Activated CD8-positive, alpha-beta T cell treated with anti-CD3 and anti-CD28 coated beads, Interleukin-2, amount 10 ng/mL, durations not matched to agents 7 days and 5 days (primary cell): ENCODE measurements at regions of chr1 and their contacts with region 1.

Region 1: DNA sequence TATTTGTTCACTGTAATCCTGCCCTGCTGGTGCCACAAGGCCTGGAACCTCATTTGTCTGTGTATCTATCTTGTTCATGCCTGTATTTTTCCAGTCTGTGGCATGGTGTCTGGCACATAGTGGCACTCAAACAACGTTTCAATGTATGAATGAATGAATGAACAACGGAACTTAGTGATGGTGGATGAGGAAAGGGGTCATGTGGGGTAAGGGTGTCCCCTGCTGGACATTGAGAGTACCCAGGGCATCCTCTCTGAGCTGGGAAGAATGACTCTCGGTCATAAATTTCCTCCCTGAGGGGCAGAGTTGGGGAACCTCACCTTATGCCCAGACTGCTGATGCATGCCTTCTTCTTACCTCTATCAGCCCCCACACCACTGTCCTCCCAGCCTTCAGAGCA is 18.9 kb upstream of the ZNF683 start:
- DNase-seq: peak; percentile 78
- ATAC-seq: peak; percentile 73
- H3K4me3 Mint-ChIP-seq: no peak overlapping the region
- H3K27ac Mint-ChIP-seq: peak overlapping the region; percentile 35
- H3K4me1 Mint-ChIP-seq: peaks cover 61% of the 10 kb centered on the region
- H3K27me3 Mint-ChIP-seq: peaks cover 3% of the 10 kb centered on the region

Region 2: GRCh38 chr1:26321315-26322041 is 70.0 kb before region 1 on chr1:
- CTCF ChIA-PET with region 1: interaction called, 29 read pairs
- POLR2A ChIA-PET with region 1: interaction called, 3 read pairs
- DNase-seq: peak; percentile 97
- ATAC-seq: peak; percentile 76
- H3K4me3 Mint-ChIP-seq: peak overlapping the region; percentile 84
- H3K27ac Mint-ChIP-seq: peak overlapping the region; percentile 94
- H3K4me1 Mint-ChIP-seq: peaks cover 49% of the 10 kb centered on the region
- H3K27me3 Mint-ChIP-seq: no peaks in the 10 kb centered on the region

Region 3: DNA sequence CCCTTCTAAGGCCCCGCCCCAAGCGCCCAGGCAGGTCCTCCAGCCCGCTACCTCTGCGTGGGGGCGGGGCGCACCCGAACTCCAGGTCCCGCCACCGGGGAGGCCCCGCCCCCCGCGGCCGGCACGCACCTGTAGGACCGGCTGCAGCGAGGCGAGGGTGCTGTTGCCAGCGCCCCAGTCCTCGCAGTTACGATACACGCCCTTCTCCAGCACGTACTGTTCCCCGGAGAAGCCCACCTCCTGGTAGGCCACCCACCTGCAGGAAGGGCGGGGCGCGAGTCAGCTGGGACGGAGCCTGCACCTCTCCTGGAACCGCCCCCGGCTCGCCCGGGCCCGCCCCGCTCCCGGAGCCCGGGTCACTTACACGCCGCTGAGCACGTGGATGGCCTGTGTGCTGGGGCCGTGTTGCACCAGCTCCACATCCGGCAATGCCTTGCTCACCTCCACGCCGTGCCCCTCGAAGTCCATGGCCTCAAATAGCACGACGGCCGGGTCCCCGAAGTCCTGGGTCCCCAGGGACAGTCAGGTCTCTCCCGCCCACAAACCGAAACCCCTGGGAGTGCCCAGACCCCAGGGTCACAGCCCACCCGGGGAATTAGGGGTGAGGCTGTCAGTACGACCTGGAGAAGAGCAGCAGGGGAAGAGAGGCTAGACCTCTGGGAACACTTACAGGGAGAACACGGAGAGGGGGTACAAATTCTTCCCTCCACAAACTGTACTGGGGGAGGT is 54.8 kb before region 1 on chr1:
- CTCF ChIA-PET with region 1: interaction called, 10 read pairs
- POLR2A ChIA-PET with region 1: no interaction called
- DNase-seq: peak; percentile 93
- ATAC-seq: peak; percentile 94
- H3K4me3 Mint-ChIP-seq: peak overlapping the region; percentile 94
- H3K27ac Mint-ChIP-seq: no peak overlapping the region
- H3K4me1 Mint-ChIP-seq: peaks cover 25% of the 10 kb centered on the region
- H3K27me3 Mint-ChIP-seq: peaks cover 5% of the 10 kb centered on the region

Region 4: DNA sequence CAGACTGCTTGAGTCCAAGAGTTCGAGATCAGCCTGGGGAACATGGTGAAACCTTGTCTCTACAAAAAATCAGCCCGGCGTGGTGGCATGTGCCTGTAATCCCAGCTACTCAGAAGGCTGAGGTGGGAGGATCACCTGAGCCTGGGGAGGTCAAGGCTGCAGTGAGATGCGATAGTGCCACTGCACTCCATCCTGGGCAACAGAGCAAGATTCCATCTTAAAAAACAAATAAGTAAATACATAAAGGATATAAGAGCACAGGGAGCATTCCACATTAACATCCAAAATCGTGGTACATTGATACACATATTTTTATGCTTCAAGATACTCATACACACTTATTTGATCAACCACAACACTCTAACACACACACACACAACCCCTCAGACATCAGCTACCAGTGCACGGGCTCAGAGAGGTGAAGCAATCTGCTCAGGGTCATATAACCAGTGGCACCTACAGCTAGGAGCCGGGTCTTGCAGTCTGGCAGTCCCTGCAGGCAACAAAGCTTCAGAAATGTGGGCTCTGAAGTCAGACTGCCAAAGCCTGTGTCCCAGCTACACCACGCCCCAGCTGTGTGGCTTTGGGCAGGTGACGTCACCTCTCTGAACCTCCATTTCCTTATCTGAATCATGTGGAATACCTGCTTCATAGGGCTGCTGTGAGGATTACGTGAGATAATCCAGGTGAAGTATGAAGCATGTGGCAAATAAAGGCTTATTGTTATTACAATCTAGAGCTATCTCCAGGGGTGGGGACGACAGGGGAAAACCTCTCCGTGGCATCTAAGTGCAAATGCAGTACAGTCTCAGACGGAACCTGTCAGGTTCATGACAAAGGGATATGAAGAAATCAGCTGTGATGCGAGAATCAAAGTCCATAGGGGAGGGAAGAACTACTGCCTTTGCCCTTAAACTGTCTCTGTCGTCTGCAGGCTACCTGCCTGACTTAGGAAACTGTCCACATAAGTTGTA is 32.8 kb before region 1 on chr1:
- CTCF ChIA-PET with region 1: interaction called, 59 read pairs
- POLR2A ChIA-PET with region 1: interaction called, 3 read pairs
- DNase-seq: peak; percentile 89
- ATAC-seq: peak; percentile 85
- H3K4me3 Mint-ChIP-seq: peak overlapping the region; percentile 47
- H3K27ac Mint-ChIP-seq: peak overlapping the region; percentile 68
- H3K4me1 Mint-ChIP-seq: peaks cover 70% of the 10 kb centered on the region
- H3K27me3 Mint-ChIP-seq: peaks cover 8% of the 10 kb centered on the region

Region 5: GRCh38 chr1:26372039-26372438 is 19.4 kb before region 1 on chr1:
- CTCF ChIA-PET with region 1: interaction called, 141 read pairs
- POLR2A ChIA-PET with region 1: interaction called, 3 read pairs
- DNase-seq: no peak
- ATAC-seq: no peak
- H3K4me3 Mint-ChIP-seq: no peak overlapping the region
- H3K27ac Mint-ChIP-seq: peak overlapping the region; percentile 90
- H3K4me1 Mint-ChIP-seq: peaks cover 87% of the 10 kb centered on the region
- H3K27me3 Mint-ChIP-seq: peaks cover 2% of the 10 kb centered on the region

Region 6: GRCh38 chr1:26378088-26378878 is 13.2 kb before region 1 on chr1:
- CTCF ChIA-PET with region 1: interaction called, 141 read pairs
- POLR2A ChIA-PET with region 1: interaction called, 3 read pairs
- DNase-seq: peak; percentile 93
- ATAC-seq: peak; percentile 95
- H3K4me3 Mint-ChIP-seq: peak overlapping the region; percentile 58
- H3K27ac Mint-ChIP-seq: peak overlapping the region; percentile 97
- H3K4me1 Mint-ChIP-seq: peaks cover 81% of the 10 kb centered on the region
- H3K27me3 Mint-ChIP-seq: no peaks in the 10 kb centered on the region